ENCODE measurements at regions of chr7 and their contacts with region 1.

Region 1: GRCh38 chr7:140062528-140063299 is at the start of gene PARP12:
- DNase-seq: peak; percentile 77 to 86 (median 83)
- ATAC-seq: peak; percentile 91
- H3K4me3 ChIP-seq: peak within 1 kb of the TSS; percentile 79
- H3K4me3 Mint-ChIP-seq: peak within 1 kb of the TSS; percentile 79 to 94 (median 90)
- H3K27ac ChIP-seq: peak within 1 kb of the TSS; percentile 81
- H3K27ac Mint-ChIP-seq: peak within 1 kb of the TSS; percentile 83 to 95 (median 92)
- H3K4me1 ChIP-seq: peaks cover 32 to 38% of the 10 kb centered on the region in 2 donors
- H3K4me1 Mint-ChIP-seq: peaks cover 34 to 55% (median 48%) of the 10 kb centered on the region in 7 donors
- H3K27me3 ChIP-seq: no peaks in the 10 kb centered on the region
- H3K27me3 Mint-ChIP-seq: peaks cover 0 to 7% (median 0%) of the 10 kb centered on the region in 5 donors
- total RNA-seq, gene PARP12: 66.2 to 145 (median 94.5) TPM

Region 2: GRCh38 chr7:138670594-138670993 is 1392.1 kb before region 1 on chr7:
- CTCF ChIA-PET with region 1: no interaction called
- POLR2A ChIA-PET with region 1: no interaction called
- intact Hi-C with region 1: no loop called
- DNase-seq: no peak
- ATAC-seq: no peak
- H3K4me3 ChIP-seq: no peak overlapping the region
- H3K4me3 Mint-ChIP-seq: no peak overlapping the region
- H3K27ac ChIP-seq: no peak overlapping the region
- H3K27ac Mint-ChIP-seq: no peak overlapping the region
- H3K4me1 ChIP-seq: no peaks in the 10 kb centered on the region
- H3K4me1 Mint-ChIP-seq: peaks cover 0 to 12% (median 0%) of the 10 kb centered on the region in 7 donors
- H3K27me3 ChIP-seq: no peaks in the 10 kb centered on the region
- H3K27me3 Mint-ChIP-seq: peaks cover 3 to 20% (median 6%) of the 10 kb centered on the region in 5 donors

Region 3: DNA sequence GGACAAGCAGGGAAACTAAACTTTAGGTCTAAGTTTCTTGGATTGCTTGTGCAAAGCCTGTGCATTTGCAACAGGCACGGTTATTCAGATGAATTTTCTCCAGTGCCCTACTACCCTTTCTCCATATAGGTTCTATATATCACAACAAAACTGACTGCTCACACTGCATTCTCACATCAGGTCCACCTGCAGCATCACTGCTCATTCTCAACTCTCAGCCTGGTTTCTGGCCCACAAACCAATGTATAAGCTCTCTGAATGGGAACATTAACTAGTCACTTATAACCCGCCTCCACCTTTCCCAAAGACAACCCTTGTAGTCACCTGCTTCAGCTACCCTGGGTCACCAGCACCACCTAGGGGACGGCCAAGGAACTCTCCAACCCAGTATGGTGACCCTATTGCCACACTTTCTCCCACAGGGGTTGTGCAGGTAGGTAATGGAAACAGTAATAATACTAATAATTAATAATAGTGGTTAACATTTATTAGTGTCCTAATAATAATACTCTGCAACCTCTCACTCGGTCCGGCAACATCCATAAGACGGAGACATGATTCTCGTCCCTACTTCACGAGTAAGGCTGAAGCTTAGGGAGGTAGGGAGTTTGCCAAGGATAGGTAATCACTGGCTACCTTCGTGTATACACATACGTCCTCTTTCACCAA is 441.9 kb before region 1 on chr7:
- CTCF ChIA-PET with region 1: no interaction called
- POLR2A ChIA-PET with region 1: no interaction called
- intact Hi-C with region 1: no loop called
- DNase-seq: peak in 8 of 9 donors; percentile 27 to 58 (median 54)
- ATAC-seq: peak; percentile 86
- H3K4me3 ChIP-seq: no peak overlapping the region
- H3K4me3 Mint-ChIP-seq: peak overlapping the region in 1 of 10 donors; percentile 10
- H3K27ac ChIP-seq: no peak overlapping the region
- H3K27ac Mint-ChIP-seq: peak overlapping the region in 6 of 9 donors; percentile 0 to 82 (median 42)
- H3K4me1 ChIP-seq: peaks cover 0 to 8% of the 10 kb centered on the region in 2 donors
- H3K4me1 Mint-ChIP-seq: peaks cover 16 to 47% (median 36%) of the 10 kb centered on the region in 7 donors
- H3K27me3 ChIP-seq: no peaks in the 10 kb centered on the region
- H3K27me3 Mint-ChIP-seq: no peaks in the 10 kb centered on the region

Region 4: DNA sequence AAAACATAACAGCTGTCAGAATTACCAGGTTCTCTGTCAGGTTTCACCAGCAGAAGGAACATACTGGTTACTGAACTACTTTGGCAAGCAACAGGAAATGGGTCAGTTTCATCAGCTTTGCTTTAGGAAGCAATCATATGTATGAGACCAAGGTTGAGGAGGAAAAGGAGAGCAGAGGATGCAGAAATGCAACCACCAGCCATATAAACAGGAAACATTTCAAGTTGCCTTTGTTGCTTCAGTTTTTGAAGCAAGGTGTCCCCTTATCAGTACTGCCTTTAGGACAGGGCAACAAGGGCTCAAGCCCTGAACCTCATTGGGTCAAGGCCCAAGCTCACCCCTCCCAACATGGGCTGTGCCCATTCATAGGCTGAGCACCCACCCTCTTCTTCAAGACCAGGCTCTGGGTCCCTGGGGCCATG is 295.1 kb before region 1 on chr7:
- CTCF ChIA-PET with region 1: no interaction called
- POLR2A ChIA-PET with region 1: interaction called, 3 read pairs
- intact Hi-C with region 1: loop called in 1 of 2 experiments (anchors 5 kb)
- DNase-seq: peak in 7 of 9 donors; percentile 30 to 77 (median 66)
- ATAC-seq: peak; percentile 76
- H3K4me3 ChIP-seq: peak overlapping the region; percentile 48
- H3K4me3 Mint-ChIP-seq: peak overlapping the region; percentile 43 to 88 (median 69)
- H3K27ac ChIP-seq: peak overlapping the region; percentile 66
- H3K27ac Mint-ChIP-seq: peak overlapping the region; percentile 80 to 97 (median 91)
- H3K4me1 ChIP-seq: peaks cover 33 to 60% of the 10 kb centered on the region in 2 donors
- H3K4me1 Mint-ChIP-seq: peaks cover 58 to 98% (median 90%) of the 10 kb centered on the region in 7 donors
- H3K27me3 ChIP-seq: no peaks in the 10 kb centered on the region
- H3K27me3 Mint-ChIP-seq: no peaks in the 10 kb centered on the region

Region 5: GRCh38 chr7:140022582-140023211 is 40.0 kb before region 1 on chr7:
- CTCF ChIA-PET with region 1: no interaction called
- POLR2A ChIA-PET with region 1: no interaction called
- intact Hi-C with region 1: no loop called
- DNase-seq: no peak
- ATAC-seq: no peak
- H3K4me3 ChIP-seq: no peak overlapping the region
- H3K4me3 Mint-ChIP-seq: no peak overlapping the region
- H3K27ac ChIP-seq: no peak overlapping the region
- H3K27ac Mint-ChIP-seq: peak overlapping the region in 2 of 9 donors; percentile 51 to 68
- H3K4me1 ChIP-seq: no peaks in the 10 kb centered on the region
- H3K4me1 Mint-ChIP-seq: peaks cover 0 to 2% (median 0%) of the 10 kb centered on the region in 7 donors
- H3K27me3 ChIP-seq: no peaks in the 10 kb centered on the region
- H3K27me3 Mint-ChIP-seq: no peaks in the 10 kb centered on the region

Region 6: DNA sequence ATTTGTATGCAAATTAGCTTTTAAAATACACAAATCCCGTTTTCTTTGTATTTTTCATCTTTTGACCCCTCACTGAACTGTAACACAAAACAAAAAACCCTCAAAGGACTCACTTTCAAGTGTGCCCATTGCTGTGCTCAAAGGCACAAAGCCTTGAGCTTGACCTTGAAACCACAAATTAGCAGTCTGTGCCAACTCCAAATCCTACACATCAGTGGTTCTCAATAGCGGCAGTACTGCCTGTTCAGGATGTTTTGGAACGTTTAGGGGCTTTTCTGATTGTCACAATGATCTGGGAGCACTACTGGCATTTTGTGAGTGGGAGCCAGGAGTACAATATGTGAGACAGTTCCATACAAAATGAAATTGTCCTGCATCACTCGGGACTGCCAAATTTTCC is 58.6 kb after region 1 on chr7:
- CTCF ChIA-PET with region 1: no interaction called
- POLR2A ChIA-PET with region 1: no interaction called
- intact Hi-C with region 1: no loop called
- DNase-seq: no peak
- ATAC-seq: no peak
- H3K4me3 ChIP-seq: no peak overlapping the region
- H3K4me3 Mint-ChIP-seq: no peak overlapping the region
- H3K27ac ChIP-seq: no peak overlapping the region
- H3K27ac Mint-ChIP-seq: peak overlapping the region in 3 of 9 donors; percentile 60 to 74 (median 69)
- H3K4me1 ChIP-seq: no peaks in the 10 kb centered on the region
- H3K4me1 Mint-ChIP-seq: peaks cover 0 to 1% (median 0%) of the 10 kb centered on the region in 7 donors
- H3K27me3 ChIP-seq: no peaks in the 10 kb centered on the region
- H3K27me3 Mint-ChIP-seq: no peaks in the 10 kb centered on the region

Region 7: GRCh38 chr7:140238778-140239652 is 176.3 kb after region 1 on chr7:
- CTCF ChIA-PET with region 1: no interaction called
- POLR2A ChIA-PET with region 1: no interaction called
- intact Hi-C with region 1: loop called in 1 of 2 experiments (anchors 1 kb)
- DNase-seq: no peak
- ATAC-seq: no peak
- H3K4me3 ChIP-seq: no peak overlapping the region
- H3K4me3 Mint-ChIP-seq: no peak overlapping the region
- H3K27ac ChIP-seq: no peak overlapping the region
- H3K27ac Mint-ChIP-seq: peak overlapping the region in 1 of 9 donors; percentile 41
- H3K4me1 ChIP-seq: no peaks in the 10 kb centered on the region
- H3K4me1 Mint-ChIP-seq: peaks cover 0 to 25% (median 13%) of the 10 kb centered on the region in 7 donors
- H3K27me3 ChIP-seq: no peaks in the 10 kb centered on the region
- H3K27me3 Mint-ChIP-seq: no peaks in the 10 kb centered on the region

Region 8: DNA sequence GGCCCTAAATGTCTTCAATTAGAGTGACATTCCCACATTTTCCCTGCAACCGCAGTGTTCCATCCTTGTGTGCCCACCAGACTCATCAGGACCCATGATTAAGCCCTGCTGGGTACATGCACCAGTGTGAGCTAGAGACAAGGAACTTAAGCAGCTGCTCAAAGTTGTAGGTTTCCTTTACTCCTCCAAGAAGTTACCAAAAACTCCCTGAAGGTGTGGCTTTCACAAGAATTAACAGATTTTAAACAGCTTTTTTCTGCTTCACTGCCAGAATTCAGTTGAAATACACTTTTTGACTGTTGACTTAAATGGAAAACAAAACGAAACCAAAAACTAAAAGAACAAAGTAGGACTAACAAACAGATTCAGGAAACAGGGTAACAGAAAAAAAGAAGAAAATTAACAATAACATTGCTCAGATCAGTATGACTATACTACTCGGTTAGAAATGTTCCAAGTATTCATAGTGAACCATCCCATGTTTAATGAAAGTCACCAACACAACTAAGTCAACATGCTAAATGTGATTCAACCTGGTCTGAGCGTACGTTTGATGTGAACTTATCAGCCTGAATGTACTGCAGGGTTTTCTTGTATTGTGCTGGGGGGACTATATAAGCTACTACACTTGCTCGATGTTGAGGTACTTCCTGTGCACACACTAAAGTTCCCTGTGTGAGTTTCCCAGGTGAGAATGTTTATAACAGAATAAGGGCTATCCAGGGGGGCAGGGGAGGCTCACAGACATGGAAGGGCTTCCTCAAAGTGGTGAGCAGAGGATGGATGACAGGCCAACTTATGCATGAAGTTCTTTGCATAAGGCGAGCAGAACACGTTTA is 313.4 kb after region 1 on chr7:
- CTCF ChIA-PET with region 1: no interaction called
- POLR2A ChIA-PET with region 1: no interaction called
- intact Hi-C with region 1: loop called in 1 of 2 experiments (anchors 5 kb)
- DNase-seq: peak in 8 of 9 donors; percentile 34 to 71 (median 56)
- ATAC-seq: peak; percentile 89
- H3K4me3 ChIP-seq: peak overlapping the region; percentile 58
- H3K4me3 Mint-ChIP-seq: peak overlapping the region; percentile 67 to 92 (median 84)
- H3K27ac ChIP-seq: peak overlapping the region; percentile 75
- H3K27ac Mint-ChIP-seq: peak overlapping the region; percentile 87 to 97 (median 93)
- H3K4me1 ChIP-seq: peaks cover 6 to 10% of the 10 kb centered on the region in 2 donors
- H3K4me1 Mint-ChIP-seq: peaks cover 0 to 48% (median 20%) of the 10 kb centered on the region in 7 donors
- H3K27me3 ChIP-seq: no peaks in the 10 kb centered on the region
- H3K27me3 Mint-ChIP-seq: no peaks in the 10 kb centered on the region

Region 9: GRCh38 chr7:140924019-140924820 is 861.5 kb after region 1 on chr7:
- CTCF ChIA-PET with region 1: no interaction called
- POLR2A ChIA-PET with region 1: no interaction called
- intact Hi-C with region 1: loop called in 1 of 2 experiments (anchors 10 kb)
- DNase-seq: peak; percentile 61 to 89 (median 70)
- ATAC-seq: peak; percentile 84
- H3K4me3 ChIP-seq: peak overlapping the region; percentile 85
- H3K4me3 Mint-ChIP-seq: peak overlapping the region in 1 of 10 donors; percentile 89
- H3K27ac ChIP-seq: peak overlapping the region; percentile 100
- H3K27ac Mint-ChIP-seq: peak overlapping the region in 3 of 9 donors; percentile 92 to 99 (median 94)
- H3K4me1 ChIP-seq: peaks cover 9 to 18% of the 10 kb centered on the region in 2 donors
- H3K4me1 Mint-ChIP-seq: peaks cover 10 to 44% (median 22%) of the 10 kb centered on the region in 7 donors
- H3K27me3 ChIP-seq: no peaks in the 10 kb centered on the region
- H3K27me3 Mint-ChIP-seq: peaks cover 0 to 5% (median 0%) of the 10 kb centered on the region in 5 donors